ENCODE measurements at regions of chr7 and their contacts with region 1.

Region 1: GRCh38 chr7:108497082-108497725 is 28.7 kb downstream of the PNPLA8 start:
- DNase-seq: peak; percentile 81
- ATAC-seq: peak; percentile 94
- H3K4me3 ChIP-seq: no peak overlapping the region
- H3K4me3 Mint-ChIP-seq: no peak overlapping the region
- H3K27ac ChIP-seq: no peak overlapping the region
- H3K27ac Mint-ChIP-seq: peak overlapping the region; percentile 34
- H3K4me1 ChIP-seq: peaks cover 16% of the 10 kb centered on the region in 2 donors
- H3K4me1 Mint-ChIP-seq: peaks cover 32% of the 10 kb centered on the region
- H3K27me3 ChIP-seq: no peaks in the 10 kb centered on the region
- H3K27me3 Mint-ChIP-seq: no peaks in the 10 kb centered on the region
- CTCF ChIP-seq: peak; percentile 97

Region 2: GRCh38 chr7:107427462-107427861 is 1069.7 kb before region 1 on chr7:
- CTCF ChIA-PET with region 1: no interaction called
- POLR2A ChIA-PET with region 1: no interaction called
- intact Hi-C with region 1: no loop called
- DNase-seq: no peak
- ATAC-seq: no peak
- H3K4me3 ChIP-seq: no peak overlapping the region
- H3K4me3 Mint-ChIP-seq: no peak overlapping the region
- H3K27ac ChIP-seq: no peak overlapping the region
- H3K27ac Mint-ChIP-seq: no peak overlapping the region
- H3K4me1 ChIP-seq: peaks cover 0 to 8% of the 10 kb centered on the region in 2 donors
- H3K4me1 Mint-ChIP-seq: peaks cover 11% of the 10 kb centered on the region
- H3K27me3 ChIP-seq: no peaks in the 10 kb centered on the region
- H3K27me3 Mint-ChIP-seq: no peaks in the 10 kb centered on the region
- CTCF ChIP-seq: no peak

Region 3: GRCh38 chr7:108181073-108181985 is 315.9 kb before region 1 on chr7:
- CTCF ChIA-PET with region 1: interaction called, 47 read pairs
- POLR2A ChIA-PET with region 1: no interaction called
- intact Hi-C with region 1: loop called (anchors 1 kb)
- DNase-seq: peak; percentile 71
- ATAC-seq: peak; percentile 66
- H3K4me3 ChIP-seq: no peak overlapping the region
- H3K4me3 Mint-ChIP-seq: no peak overlapping the region
- H3K27ac ChIP-seq: no peak overlapping the region
- H3K27ac Mint-ChIP-seq: no peak overlapping the region
- H3K4me1 ChIP-seq: no peaks in the 10 kb centered on the region
- H3K4me1 Mint-ChIP-seq: no peaks in the 10 kb centered on the region
- H3K27me3 ChIP-seq: peaks cover 0 to 3% (median 0%) of the 10 kb centered on the region in 4 experiments
- H3K27me3 Mint-ChIP-seq: peaks cover 6% of the 10 kb centered on the region
- CTCF ChIP-seq: peak; percentile 90

Region 4: DNA sequence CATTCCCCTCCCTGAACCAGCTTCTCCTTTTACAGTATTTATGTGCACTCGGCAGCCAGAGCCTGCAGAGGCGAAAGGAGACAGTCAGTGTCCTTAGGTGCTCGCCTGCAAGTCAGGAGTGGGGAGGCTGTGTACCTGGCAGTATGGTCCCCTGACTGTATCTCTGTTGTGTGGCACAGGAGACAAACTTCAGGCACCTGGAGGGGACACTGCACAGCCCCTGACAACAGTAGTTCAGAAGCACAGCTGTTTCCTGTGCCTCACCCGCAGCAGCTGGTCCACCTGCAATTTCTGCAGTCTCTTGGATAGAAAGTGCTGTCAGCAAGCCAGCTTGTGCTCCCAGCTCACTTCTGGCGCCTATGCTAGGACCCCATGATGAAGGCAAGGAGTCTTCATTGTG is 293.7 kb before region 1 on chr7:
- CTCF ChIA-PET with region 1: no interaction called
- POLR2A ChIA-PET with region 1: no interaction called
- intact Hi-C with region 1: no loop called
- DNase-seq: no peak
- ATAC-seq: no peak
- H3K4me3 ChIP-seq: no peak overlapping the region
- H3K4me3 Mint-ChIP-seq: no peak overlapping the region
- H3K27ac ChIP-seq: no peak overlapping the region
- H3K27ac Mint-ChIP-seq: no peak overlapping the region
- H3K4me1 ChIP-seq: no peaks in the 10 kb centered on the region
- H3K4me1 Mint-ChIP-seq: peaks cover 1% of the 10 kb centered on the region
- H3K27me3 ChIP-seq: peaks cover 0 to 4% (median 2%) of the 10 kb centered on the region in 4 experiments
- H3K27me3 Mint-ChIP-seq: peaks cover 3% of the 10 kb centered on the region
- CTCF ChIP-seq: no peak

Region 5: DNA sequence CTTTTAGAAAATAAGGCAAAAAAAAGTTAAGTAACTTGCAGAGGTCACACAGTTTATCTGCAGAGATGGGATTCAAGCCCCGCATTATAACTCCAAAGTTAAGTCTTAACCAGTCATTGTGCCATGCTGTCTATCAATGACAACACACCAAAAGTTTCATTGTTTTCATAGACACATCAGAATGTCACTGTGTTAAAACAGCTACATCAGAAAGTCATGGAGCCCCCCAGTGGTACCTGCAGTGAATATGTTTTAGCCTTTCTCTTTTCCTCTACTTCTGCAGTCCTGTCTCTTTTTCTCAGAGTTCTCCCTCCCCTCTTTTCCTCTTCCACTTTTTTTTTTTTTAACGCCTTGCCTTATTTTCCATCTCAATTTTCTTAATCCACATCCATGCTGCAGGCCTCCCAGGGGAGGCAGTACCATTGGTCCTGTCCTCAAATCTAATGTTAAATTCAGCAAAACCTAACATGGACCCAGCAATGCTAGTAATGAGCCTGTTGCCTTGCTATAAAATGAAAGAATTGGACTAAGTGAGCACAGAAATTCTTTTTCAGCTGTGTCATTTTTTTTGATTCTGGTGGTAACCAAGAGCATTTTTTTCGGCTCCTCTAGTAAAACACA is 37.2 kb before region 1 on chr7:
- CTCF ChIA-PET with region 1: interaction called, 58 read pairs
- POLR2A ChIA-PET with region 1: no interaction called
- intact Hi-C with region 1: no loop called
- DNase-seq: peak; percentile 49
- ATAC-seq: peak; percentile 39
- H3K4me3 ChIP-seq: no peak overlapping the region
- H3K4me3 Mint-ChIP-seq: no peak overlapping the region
- H3K27ac ChIP-seq: no peak overlapping the region
- H3K27ac Mint-ChIP-seq: no peak overlapping the region
- H3K4me1 ChIP-seq: peaks cover 12 to 15% of the 10 kb centered on the region in 2 donors
- H3K4me1 Mint-ChIP-seq: peaks cover 10% of the 10 kb centered on the region
- H3K27me3 ChIP-seq: peaks cover 0 to 53% (median 29%) of the 10 kb centered on the region in 4 experiments
- H3K27me3 Mint-ChIP-seq: peaks cover 55% of the 10 kb centered on the region
- CTCF ChIP-seq: peak; percentile 71

Region 6: DNA sequence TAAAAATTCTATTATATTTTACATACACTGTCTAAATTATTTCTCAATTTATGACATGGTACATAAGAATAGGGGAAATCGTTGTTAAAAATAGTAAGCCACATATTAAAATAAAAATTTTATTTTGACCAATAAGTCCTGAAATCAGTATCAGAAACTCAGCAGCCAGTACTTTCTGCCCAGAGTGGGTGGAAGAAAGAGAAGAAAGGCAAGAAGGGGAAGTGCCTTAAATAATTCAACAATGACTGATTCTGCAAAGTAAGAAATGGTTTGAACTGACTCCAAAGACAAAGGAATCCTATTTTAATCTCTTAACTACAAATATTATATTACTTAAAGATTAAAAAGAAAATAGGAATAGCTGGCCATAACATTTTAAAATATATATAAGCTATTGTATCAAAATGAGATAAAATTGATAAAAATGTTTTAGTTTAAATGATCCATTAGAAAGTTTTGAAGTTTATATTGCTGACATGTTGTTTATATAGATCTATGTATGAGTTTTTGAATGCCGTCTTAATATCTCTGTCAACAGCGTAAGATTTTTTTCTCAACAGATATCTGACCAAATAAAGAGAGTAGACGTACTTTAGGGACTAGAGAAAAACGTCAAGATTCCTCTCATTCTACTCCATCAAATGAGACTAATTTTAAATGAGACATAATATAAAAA is 10.8 kb before region 1 on chr7:
- CTCF ChIA-PET with region 1: interaction called, 11 read pairs
- POLR2A ChIA-PET with region 1: no interaction called
- intact Hi-C with region 1: no loop called
- DNase-seq: no peak
- ATAC-seq: no peak
- H3K4me3 ChIP-seq: no peak overlapping the region
- H3K4me3 Mint-ChIP-seq: no peak overlapping the region
- H3K27ac ChIP-seq: no peak overlapping the region
- H3K27ac Mint-ChIP-seq: no peak overlapping the region
- H3K4me1 ChIP-seq: peaks cover 0 to 3% of the 10 kb centered on the region in 2 donors
- H3K4me1 Mint-ChIP-seq: peaks cover 6% of the 10 kb centered on the region
- H3K27me3 ChIP-seq: no peaks in the 10 kb centered on the region
- H3K27me3 Mint-ChIP-seq: no peaks in the 10 kb centered on the region
- CTCF ChIP-seq: no peak

Region 7: DNA sequence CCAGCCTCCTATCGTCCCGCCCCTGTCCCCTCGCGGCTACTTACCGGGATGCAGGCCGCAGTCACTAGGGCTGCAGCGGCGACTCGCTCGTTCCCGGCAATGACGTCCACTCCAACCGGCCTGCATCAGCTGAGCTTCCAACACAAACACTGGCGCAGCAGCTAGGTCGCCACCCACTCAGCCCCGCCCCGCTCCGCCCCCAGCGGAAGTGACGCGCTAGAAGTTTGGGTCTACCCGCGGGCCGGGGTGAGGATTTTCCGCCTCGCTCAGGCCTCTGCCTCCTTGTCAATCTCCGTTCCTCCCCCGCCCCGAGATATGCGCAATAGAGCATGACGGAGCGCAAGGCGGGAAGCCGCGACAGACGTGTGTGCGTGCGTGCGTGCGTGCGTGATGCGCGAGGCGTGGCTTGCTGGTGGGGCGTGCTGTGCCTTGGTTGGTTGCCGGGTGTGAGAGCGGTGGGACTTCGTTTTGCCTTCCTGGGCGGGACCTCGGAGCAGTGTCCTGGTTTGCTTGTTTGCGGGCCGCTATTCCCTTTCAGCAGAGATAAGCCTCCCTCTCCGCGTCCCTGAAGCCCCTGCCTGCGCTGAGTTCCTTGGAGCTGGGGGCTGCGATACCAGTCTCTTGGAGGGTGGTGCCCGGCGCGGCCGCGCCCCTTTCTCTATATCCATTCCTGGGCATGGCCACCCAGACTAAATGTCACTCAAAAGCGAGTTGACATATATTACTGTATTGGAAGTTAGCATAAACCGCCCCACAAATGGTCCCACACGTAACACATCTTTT is 29.0 kb after region 1 on chr7 and contains the start of gene PNPLA8:
- CTCF ChIA-PET with region 1: interaction called, 44 read pairs
- POLR2A ChIA-PET with region 1: interaction called, 8 read pairs
- intact Hi-C with region 1: no loop called
- DNase-seq: peak; percentile 100
- ATAC-seq: peak; percentile 90
- H3K4me3 ChIP-seq: peak within 1 kb of the TSS; percentile 77 to 97 (median 94)
- H3K4me3 Mint-ChIP-seq: peak within 1 kb of the TSS; percentile 99
- H3K27ac ChIP-seq: peak within 1 kb of the TSS; percentile 94 to 97
- H3K27ac Mint-ChIP-seq: peak within 1 kb of the TSS; percentile 99
- H3K4me1 ChIP-seq: peaks cover 34 to 37% of the 10 kb centered on the region in 2 donors
- H3K4me1 Mint-ChIP-seq: peaks cover 46% of the 10 kb centered on the region
- H3K27me3 ChIP-seq: no peaks in the 10 kb centered on the region
- H3K27me3 Mint-ChIP-seq: no peaks in the 10 kb centered on the region
- CTCF ChIP-seq: no peak
- total RNA-seq, gene PNPLA8: 56.3 and 57.3 TPM in 2 replicates